GM12878 (cell line): ENCODE measurements at regions of chr4 and their contacts with region 1.

Region 1: DNA sequence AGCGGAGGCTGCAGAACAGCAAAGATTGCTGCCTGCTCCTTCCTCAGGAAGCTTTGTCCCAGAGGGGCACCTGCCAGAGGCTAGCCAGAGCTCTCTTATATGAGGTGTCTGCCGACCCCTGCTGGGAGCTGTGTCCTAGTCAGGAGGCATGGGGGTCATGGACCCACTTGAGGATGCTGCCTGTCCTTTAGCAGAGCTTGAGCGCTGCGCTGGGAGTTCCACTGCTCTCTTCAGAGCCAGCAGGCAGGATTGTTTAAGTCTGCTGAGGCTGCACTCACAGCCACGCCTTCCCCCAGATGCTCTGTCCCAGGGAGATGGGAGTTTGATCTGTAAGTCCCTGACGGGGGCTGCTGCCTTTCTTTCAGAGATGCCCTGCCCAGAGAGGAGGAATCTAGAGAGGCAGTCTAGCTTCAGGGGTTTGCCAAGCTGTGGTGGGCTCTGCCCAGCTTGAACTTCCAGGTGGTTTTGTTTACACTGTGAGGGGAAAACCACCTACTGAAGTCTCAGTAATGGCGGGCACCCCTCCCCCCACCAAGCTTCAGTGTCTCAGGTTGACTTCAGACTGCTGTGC is 10.9 kb downstream of the DCK start:
- DNase-seq: no peak
- ATAC-seq: peak; percentile 74
- H3K4me3 ChIP-seq: peak overlapping the region; percentile 45; the same call in 1 of the 2 replicates
- H3K27ac ChIP-seq: peak overlapping the region; percentile 24; the same call in 1 of the 2 replicates
- H3K4me1 ChIP-seq: peaks cover 9% of the 10 kb centered on the region
- H3K27me3 ChIP-seq: no peaks in the 10 kb centered on the region
- CTCF ChIP-seq: peak in 1 of 3 experiments; percentile 26; a peak in 1 of 6 replicates
- EP300 ChIP-seq: no peak
- POLR2A ChIP-seq: no peak
- RAD21 ChIP-seq: peak; percentile 47

Region 2: GRCh38 chr4:70480650-70481049 is 523.7 kb before region 1 on chr4:
- CTCF ChIA-PET with region 1: no interaction called
- POLR2A ChIA-PET with region 1: no interaction called
- RAD21 ChIA-PET with region 1: no interaction called
- SMC1A ChIA-PET with region 1: no interaction called
- in situ Hi-C with region 1: no loop called
- intact Hi-C with region 1: no loop called
- DNase-seq: no peak
- ATAC-seq: no peak
- H3K4me3 ChIP-seq: no peak overlapping the region
- H3K27ac ChIP-seq: no peak overlapping the region
- H3K4me1 ChIP-seq: no peaks in the 10 kb centered on the region
- H3K27me3 ChIP-seq: no peaks in the 10 kb centered on the region; a peak in 1 of 4 replicates
- CTCF ChIP-seq: no peak
- EP300 ChIP-seq: no peak
- POLR2A ChIP-seq: no peak
- RAD21 ChIP-seq: no peak

Region 3: GRCh38 chr4:70885174-70885573 is 119.2 kb before region 1 on chr4:
- CTCF ChIA-PET with region 1: interaction called, 10 read pairs
- POLR2A ChIA-PET with region 1: no interaction called
- RAD21 ChIA-PET with region 1: no interaction called
- SMC1A ChIA-PET with region 1: no interaction called
- in situ Hi-C with region 1: no loop called
- intact Hi-C with region 1: no loop called
- DNase-seq: no peak
- ATAC-seq: no peak
- H3K4me3 ChIP-seq: no peak overlapping the region
- H3K27ac ChIP-seq: no peak overlapping the region
- H3K4me1 ChIP-seq: no peaks in the 10 kb centered on the region
- H3K27me3 ChIP-seq: no peaks in the 10 kb centered on the region; a peak in 1 of 4 replicates
- CTCF ChIP-seq: no peak; a peak in 1 of 6 replicates
- EP300 ChIP-seq: no peak
- POLR2A ChIP-seq: no peak
- RAD21 ChIP-seq: no peak

Region 4: GRCh38 chr4:71171592-71171991 is 167.2 kb after region 1 on chr4:
- CTCF ChIA-PET with region 1: no interaction called
- POLR2A ChIA-PET with region 1: no interaction called
- RAD21 ChIA-PET with region 1: no interaction called
- SMC1A ChIA-PET with region 1: no interaction called
- in situ Hi-C with region 1: no loop called
- intact Hi-C with region 1: no loop called
- DNase-seq: no peak
- ATAC-seq: no peak
- H3K4me3 ChIP-seq: no peak overlapping the region
- H3K27ac ChIP-seq: no peak overlapping the region
- H3K4me1 ChIP-seq: no peaks in the 10 kb centered on the region
- H3K27me3 ChIP-seq: no peaks in the 10 kb centered on the region
- CTCF ChIP-seq: no peak
- EP300 ChIP-seq: no peak
- POLR2A ChIP-seq: no peak
- RAD21 ChIP-seq: no peak